Adrenal gland (tissue), 19 donors: ENCODE measurements at regions of chr16 and their contacts with region 1.

Region 1: GRCh38 chr16:86072328-86073102 is 173.6 kb downstream of the IRF8 start:
- DNase-seq: peak; percentile 30 to 81 (median 64)
- H3K4me3 ChIP-seq: no peak overlapping the region
- H3K27ac ChIP-seq: no peak overlapping the region
- H3K4me1 ChIP-seq: no peaks in the 10 kb centered on the region
- H3K27me3 ChIP-seq: peaks cover 17% of the 10 kb centered on the region
- CTCF ChIP-seq: peak; percentile 58 to 78 (median 64)
- POLR2A ChIP-seq: no peak

Region 2: GRCh38 chr16:86343027-86343787 is 270.7 kb after region 1 on chr16:
- intact Hi-C with region 1: loop called in 1 of 2 experiments (anchors 10 kb)
- DNase-seq: peak in 5 of 7 donors; percentile 27 to 61 (median 29)
- H3K4me3 ChIP-seq: no peak overlapping the region
- H3K27ac ChIP-seq: peak overlapping the region in 1 of 5 donors; percentile 72
- H3K4me1 ChIP-seq: peaks cover 0 to 3% of the 10 kb centered on the region in 2 donors
- H3K27me3 ChIP-seq: peaks cover 5% of the 10 kb centered on the region
- CTCF ChIP-seq: no peak
- POLR2A ChIP-seq: no peak